ENCODE measurements at regions of chr19 and their contacts with region 1.

Region 1: DNA sequence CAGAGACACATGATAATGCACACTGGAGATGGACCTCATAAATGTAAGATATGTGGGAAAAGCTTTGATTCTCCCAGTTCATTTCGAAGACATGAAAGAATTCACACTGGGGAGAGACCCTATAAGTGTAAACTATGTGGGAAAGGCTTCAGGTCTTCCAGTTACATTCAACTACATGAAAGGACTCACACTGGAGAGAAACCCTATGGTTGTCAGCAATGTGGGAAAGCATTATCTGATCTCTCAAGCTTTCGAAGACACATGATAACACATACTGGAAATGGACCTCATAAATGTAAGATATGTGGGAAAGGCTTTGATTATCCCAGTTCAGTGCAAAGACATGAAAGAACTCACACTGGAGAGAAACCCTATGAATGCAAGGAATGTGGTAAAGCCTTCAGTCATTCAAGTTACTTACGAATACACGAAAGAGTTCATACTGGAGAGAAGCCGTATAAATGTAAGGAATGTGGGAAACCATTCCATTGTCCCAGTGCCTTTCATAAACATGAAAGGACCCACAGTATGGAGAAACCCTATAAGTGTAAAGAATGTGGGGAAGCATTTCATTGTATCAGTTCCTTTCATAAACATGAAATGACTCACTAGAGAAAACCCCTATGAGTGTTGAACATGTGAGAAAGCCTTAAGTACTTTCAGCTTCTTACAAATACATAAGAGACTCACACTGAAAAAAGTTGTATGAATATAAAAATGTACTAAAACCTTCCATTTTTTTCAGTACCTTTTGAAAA is 14.7 kb downstream of the ZNF441 start:
- DNase-seq: no peak
- ATAC-seq: no peak
- H3K4me3 Mint-ChIP-seq: no peak overlapping the region
- H3K27ac Mint-ChIP-seq: no peak overlapping the region
- H3K4me1 Mint-ChIP-seq: no peaks in the 10 kb centered on the region
- H3K27me3 Mint-ChIP-seq: no peaks in the 10 kb centered on the region

Region 2: GRCh38 chr19:11752244-11752736 is 29.2 kb before region 1 on chr19:
- CTCF ChIA-PET with region 1: no interaction called
- POLR2A ChIA-PET with region 1: no interaction called
- intact Hi-C with region 1: no loop called
- DNase-seq: no peak
- ATAC-seq: no peak
- H3K4me3 Mint-ChIP-seq: no peak overlapping the region
- H3K27ac Mint-ChIP-seq: no peak overlapping the region
- H3K4me1 Mint-ChIP-seq: no peaks in the 10 kb centered on the region
- H3K27me3 Mint-ChIP-seq: peaks cover 12% of the 10 kb centered on the region

Region 3: GRCh38 chr19:11821474-11822109 is 40.1 kb after region 1 on chr19:
- CTCF ChIA-PET with region 1: no interaction called
- POLR2A ChIA-PET with region 1: no interaction called
- intact Hi-C with region 1: loop called in 1 of 2 experiments (anchors 5 kb)
- DNase-seq: peak; percentile 27
- ATAC-seq: peak; percentile 73
- H3K4me3 Mint-ChIP-seq: no peak overlapping the region
- H3K27ac Mint-ChIP-seq: peak overlapping the region; percentile 26
- H3K4me1 Mint-ChIP-seq: peaks cover 7% of the 10 kb centered on the region
- H3K27me3 Mint-ChIP-seq: no peaks in the 10 kb centered on the region

Region 4: GRCh38 chr19:11949201-11949600 is 167.7 kb after region 1 on chr19:
- CTCF ChIA-PET with region 1: no interaction called
- POLR2A ChIA-PET with region 1: no interaction called
- intact Hi-C with region 1: loop called in 1 of 2 experiments (anchors 10 kb)
- DNase-seq: no peak
- ATAC-seq: no peak
- H3K4me3 Mint-ChIP-seq: no peak overlapping the region
- H3K27ac Mint-ChIP-seq: no peak overlapping the region
- H3K4me1 Mint-ChIP-seq: no peaks in the 10 kb centered on the region
- H3K27me3 Mint-ChIP-seq: no peaks in the 10 kb centered on the region